Caco-2 (cell line): ENCODE measurements at regions of chr5 and their contacts with region 1.

Region 1: GRCh38 chr5:178895651-178896571 is at the start of gene ZFP2:
- DNase-seq: peak; percentile 71 to 74
- H3K4me3 ChIP-seq: peak within 1 kb of the TSS; percentile 94
- H3K4me3 Mint-ChIP-seq: peak within 1 kb of the TSS; percentile 80
- H3K27ac Mint-ChIP-seq: no peak within 1 kb of the TSS
- H3K4me1 ChIP-seq: no peaks in the 10 kb centered on the region
- H3K4me1 Mint-ChIP-seq: no peaks in the 10 kb centered on the region
- H3K27me3 ChIP-seq: no peaks in the 10 kb centered on the region
- H3K27me3 Mint-ChIP-seq: no peaks in the 10 kb centered on the region
- CTCF ChIP-seq: no peak
- total RNA-seq, gene ZFP2: 0.29 and 0.35 TPM in 2 replicates

Region 2: DNA sequence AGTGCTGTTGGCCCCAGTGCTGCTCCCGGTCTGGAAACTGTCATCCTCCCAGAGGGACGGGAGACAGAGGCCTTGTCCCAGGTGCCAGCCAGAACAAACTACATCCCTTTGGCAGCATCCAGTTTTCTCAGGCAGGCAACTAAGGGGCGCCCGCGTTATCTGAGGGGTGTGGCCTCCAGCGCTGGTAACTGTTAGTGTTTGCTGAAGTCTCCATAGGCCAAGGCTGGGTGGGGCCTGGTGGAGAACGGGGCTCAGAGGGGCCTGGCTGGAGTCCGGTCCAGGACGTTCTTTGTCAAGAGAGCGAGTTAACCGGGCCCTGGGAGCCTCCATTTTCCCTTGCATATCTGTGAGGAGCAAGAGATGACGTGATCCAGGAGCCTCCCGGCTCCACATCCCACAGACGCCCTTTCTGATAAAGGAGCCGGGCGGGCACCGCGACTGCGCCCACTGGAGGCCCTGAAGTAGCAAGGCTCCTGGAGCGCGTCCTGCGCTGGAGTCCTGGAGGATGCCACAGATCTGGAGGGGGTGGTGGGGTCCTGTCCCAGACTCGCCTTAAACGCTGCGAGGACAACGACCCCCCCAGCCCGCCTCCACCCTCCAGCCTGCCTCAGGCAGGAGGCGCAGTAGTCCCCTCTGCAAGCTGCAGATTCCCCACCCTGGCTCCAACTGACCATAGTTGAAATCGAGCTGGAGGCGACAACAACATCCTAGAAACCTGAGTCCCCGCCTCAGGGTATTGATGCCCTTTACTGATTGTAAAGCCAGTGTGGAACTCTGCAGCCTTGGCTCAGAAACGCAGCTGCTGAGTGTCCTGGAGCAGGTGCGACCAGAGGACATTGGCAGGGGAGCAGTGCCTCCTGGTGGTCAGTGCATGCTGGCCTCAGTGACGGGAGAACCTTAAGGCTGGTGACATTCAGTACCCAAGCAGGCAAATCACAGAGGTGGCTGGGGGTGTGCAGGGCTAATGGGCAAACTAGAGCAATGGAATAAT is 56.9 kb before region 1 on chr5:
- CTCF ChIA-PET with region 1: no interaction called
- POLR2A ChIA-PET with region 1: no interaction called
- intact Hi-C with region 1: no loop called
- DNase-seq: peak; percentile 56 to 66
- H3K4me3 ChIP-seq: no peak overlapping the region
- H3K4me3 Mint-ChIP-seq: no peak overlapping the region
- H3K27ac Mint-ChIP-seq: no peak overlapping the region
- H3K4me1 ChIP-seq: no peaks in the 10 kb centered on the region
- H3K4me1 Mint-ChIP-seq: no peaks in the 10 kb centered on the region
- H3K27me3 ChIP-seq: no peaks in the 10 kb centered on the region
- H3K27me3 Mint-ChIP-seq: no peaks in the 10 kb centered on the region
- CTCF ChIP-seq: peak; percentile 54 to 55

Region 3: DNA sequence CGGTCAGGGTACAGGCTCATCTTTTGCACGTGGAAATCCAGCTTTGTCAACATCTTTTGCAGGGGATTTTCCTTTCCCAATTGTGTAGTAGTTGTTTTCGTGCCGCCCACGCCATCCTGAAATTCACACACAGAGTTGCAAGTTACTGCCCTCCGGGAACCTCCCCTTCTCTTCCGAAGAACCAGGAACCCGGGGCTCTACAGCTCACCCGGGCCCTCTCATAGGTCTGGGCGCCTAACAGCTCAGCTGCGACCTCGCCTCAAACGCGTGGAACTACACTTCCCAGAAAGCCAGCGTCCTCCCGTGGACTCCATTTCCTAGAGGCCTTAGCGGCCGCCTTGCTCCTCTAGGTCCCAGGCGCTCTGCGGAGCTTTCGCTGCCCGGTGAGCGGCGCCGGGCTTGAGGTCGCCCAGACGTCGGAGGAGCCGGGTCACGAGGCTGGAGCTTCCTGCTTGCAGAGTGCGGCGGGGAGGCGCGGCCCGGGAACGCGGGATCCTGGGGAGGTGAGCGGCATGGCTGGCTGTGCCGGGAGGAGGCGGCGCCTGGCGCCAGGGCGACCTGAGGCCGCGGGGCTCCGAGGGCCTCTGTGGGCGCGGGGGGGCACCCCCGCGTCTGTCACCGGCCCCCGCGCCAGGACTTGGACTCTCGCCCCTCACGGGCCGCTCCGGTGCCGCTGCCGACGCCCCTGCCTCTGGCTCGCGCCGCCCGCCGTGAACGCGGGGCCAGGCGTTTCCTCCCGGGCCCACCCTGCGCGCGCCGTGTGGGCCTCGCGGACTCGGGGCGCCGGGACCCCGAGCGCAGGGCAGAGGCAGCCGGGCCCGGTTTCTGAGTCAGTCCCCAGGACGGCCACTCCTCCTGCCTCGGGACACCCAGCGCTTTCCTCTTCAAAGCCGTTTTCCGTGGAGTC is 36.0 kb before region 1 on chr5 and contains the start of gene ZNF354B:
- CTCF ChIA-PET with region 1: no interaction called
- POLR2A ChIA-PET with region 1: interaction called, 3 read pairs
- intact Hi-C with region 1: loop called (anchors 1 kb)
- DNase-seq: peak; percentile 93 to 95
- H3K4me3 ChIP-seq: peak within 1 kb of the TSS; percentile 48
- H3K4me3 Mint-ChIP-seq: peak within 1 kb of the TSS; percentile 93
- H3K27ac Mint-ChIP-seq: peak within 1 kb of the TSS; percentile 92
- H3K4me1 ChIP-seq: no peaks in the 10 kb centered on the region
- H3K4me1 Mint-ChIP-seq: peaks cover 15% of the 10 kb centered on the region
- H3K27me3 ChIP-seq: no peaks in the 10 kb centered on the region
- H3K27me3 Mint-ChIP-seq: no peaks in the 10 kb centered on the region
- CTCF ChIP-seq: no peak
- total RNA-seq, gene ZNF354B: 21.0 and 22.3 TPM in 2 replicates

Region 4: DNA sequence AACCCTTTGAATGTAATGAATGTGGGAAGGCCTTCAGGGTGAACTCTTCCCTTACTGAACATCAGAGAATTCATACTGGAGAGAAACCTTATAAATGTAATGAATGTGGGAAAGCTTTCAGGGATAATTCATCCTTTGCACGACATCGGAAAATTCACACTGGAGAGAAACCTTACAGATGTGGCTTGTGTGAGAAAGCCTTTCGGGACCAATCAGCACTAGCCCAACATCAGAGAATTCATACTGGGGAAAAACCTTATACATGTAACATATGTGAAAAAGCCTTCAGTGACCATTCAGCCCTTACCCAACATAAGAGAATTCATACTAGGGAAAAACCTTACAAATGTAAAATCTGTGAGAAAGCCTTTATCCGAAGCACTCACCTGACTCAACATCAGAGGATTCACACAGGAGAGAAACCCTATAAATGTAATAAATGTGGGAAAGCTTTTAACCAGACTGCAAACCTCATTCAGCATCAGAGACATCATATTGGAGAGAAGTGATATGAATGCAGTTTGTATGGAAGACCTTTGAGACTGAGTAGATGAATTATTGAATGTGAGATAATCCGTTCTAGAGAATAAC is 69.6 kb after region 1 on chr5:
- CTCF ChIA-PET with region 1: no interaction called
- POLR2A ChIA-PET with region 1: no interaction called
- intact Hi-C with region 1: no loop called
- DNase-seq: no peak
- H3K4me3 ChIP-seq: no peak overlapping the region
- H3K4me3 Mint-ChIP-seq: no peak overlapping the region
- H3K27ac Mint-ChIP-seq: no peak overlapping the region
- H3K4me1 ChIP-seq: no peaks in the 10 kb centered on the region
- H3K4me1 Mint-ChIP-seq: no peaks in the 10 kb centered on the region
- H3K27me3 ChIP-seq: no peaks in the 10 kb centered on the region
- H3K27me3 Mint-ChIP-seq: no peaks in the 10 kb centered on the region
- CTCF ChIP-seq: no peak